Breast epithelium (tissue), 4 donors: ENCODE measurements at regions of chr3 and their contacts with region 1.

Region 1: DNA sequence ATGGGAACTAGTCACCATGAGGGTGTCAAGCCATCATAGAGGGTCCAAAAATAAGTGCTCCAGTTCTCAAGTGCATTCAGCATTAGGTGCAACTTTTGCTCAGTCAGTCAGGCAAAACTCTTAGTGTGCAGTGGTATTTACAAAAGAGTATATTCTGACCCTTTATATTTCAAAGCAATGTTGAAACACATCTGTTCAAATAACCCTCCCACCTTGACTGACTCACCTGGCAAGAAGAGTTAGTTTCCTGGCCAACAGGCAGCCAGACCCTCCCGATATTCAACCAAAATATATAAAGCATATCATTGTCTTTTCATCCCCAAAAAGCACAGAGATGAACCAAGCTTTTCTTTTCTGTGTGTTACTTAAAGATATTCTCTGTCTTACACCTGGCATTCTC is 7.6 kb upstream of the COL8A1 start:
- DNase-seq: no peak
- H3K4me3 ChIP-seq: no peak overlapping the region
- H3K27ac ChIP-seq: no peak overlapping the region
- H3K4me1 ChIP-seq: no peaks in the 10 kb centered on the region
- H3K27me3 ChIP-seq: peaks cover 0 to 13% of the 10 kb centered on the region in 2 donors
- CTCF ChIP-seq: no peak
- POLR2A ChIP-seq: no peak

Region 2: DNA sequence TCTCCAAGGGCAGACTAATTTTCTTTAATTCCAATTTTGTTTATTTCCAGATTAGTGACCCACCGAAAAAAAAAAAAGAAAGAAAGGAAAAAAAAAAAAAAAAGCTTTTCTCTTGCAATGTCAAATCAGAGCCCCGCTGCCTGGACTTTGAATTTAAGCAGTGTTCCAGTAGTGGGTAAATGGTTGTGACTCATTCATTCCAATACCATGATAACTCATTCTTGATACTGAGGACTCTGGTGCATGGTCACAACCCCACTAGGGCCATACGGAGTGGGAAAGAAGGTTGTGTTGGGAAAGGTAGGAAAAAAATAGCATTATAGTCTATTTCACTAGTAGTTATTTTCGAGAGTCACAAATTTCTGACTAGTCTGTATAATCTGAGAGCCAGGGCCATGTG is 51.6 kb before region 1 on chr3:
- intact Hi-C with region 1: loop called (anchors 2 kb)
- DNase-seq: no peak
- H3K4me3 ChIP-seq: no peak overlapping the region
- H3K27ac ChIP-seq: no peak overlapping the region
- H3K4me1 ChIP-seq: no peaks in the 10 kb centered on the region
- H3K27me3 ChIP-seq: no peaks in the 10 kb centered on the region
- CTCF ChIP-seq: no peak
- POLR2A ChIP-seq: no peak